Left colon (tissue), 2 donors: ENCODE measurements at regions of chr11 and their contacts with region 1.

Region 1: GRCh38 chr11:43282607-43283440 is 29.0 kb upstream of the API5 start:
- DNase-seq: peak in 1 of 2 donors; percentile 31
- ATAC-seq: no peak

Region 2: GRCh38 chr11:42770444-42771065 is 512.3 kb before region 1 on chr11:
- intact Hi-C with region 1: loop called in 1 of 2 experiments (anchors 10 kb)
- DNase-seq: peak in 1 of 2 donors; percentile 4
- ATAC-seq: no peak